Ovary (tissue), 10 donors: ENCODE measurements at regions of chr1 and their contacts with region 1.

Region 1: GRCh38 chr1:39538588-39539465 is 37.8 kb downstream of the PABPC4 start:
- DNase-seq: peak; percentile 72 to 81 (median 73)
- H3K4me3 ChIP-seq: no peak overlapping the region
- H3K27ac ChIP-seq: no peak overlapping the region
- H3K4me1 ChIP-seq: no peaks in the 10 kb centered on the region
- H3K27me3 ChIP-seq: no peaks in the 10 kb centered on the region
- CTCF ChIP-seq: peak; percentile 77 to 93 (median 83)
- EP300 ChIP-seq: no peak
- POLR2A ChIP-seq: no peak

Region 2: DNA sequence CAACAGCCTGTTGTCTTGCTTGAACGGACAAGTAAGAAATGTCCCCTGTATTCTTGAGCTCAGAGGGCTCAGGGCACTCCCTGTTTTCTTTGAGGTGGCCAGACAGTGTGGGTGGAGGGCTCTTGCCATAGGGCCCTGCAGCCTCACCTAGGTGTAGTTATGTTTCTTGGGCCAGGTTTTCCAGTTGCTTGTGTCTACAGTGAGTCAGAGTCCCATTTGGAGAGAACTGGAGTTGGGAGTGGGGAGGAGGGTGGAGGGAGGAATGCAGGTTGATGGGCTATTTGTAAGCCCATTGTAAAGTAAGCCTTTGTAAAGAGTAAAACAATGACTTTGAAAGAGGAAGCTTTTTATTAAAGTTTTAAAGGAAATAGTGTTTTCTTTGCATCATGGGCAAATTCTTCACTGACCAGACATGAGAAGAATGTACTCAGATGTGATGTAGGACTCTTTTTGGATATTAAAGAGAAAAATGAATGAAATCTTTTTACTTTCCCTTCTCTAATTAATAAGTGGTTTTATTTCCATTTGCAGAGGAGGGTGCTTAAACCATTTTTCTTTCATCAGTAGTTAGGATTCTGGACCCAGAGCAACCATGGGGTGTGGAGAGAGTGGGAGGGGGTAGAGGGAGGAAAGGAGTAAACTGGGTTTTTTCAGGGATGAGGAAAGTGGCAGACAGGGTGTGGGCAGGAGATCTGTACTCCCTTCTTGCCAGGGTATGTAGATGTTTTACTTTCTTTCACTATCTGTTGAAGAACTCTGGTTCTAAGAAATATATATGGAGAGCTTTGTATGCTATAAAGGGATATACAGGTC is 379.4 kb before region 1 on chr1:
- intact Hi-C with region 1: no loop called
- DNase-seq: no peak
- H3K4me3 ChIP-seq: no peak overlapping the region
- H3K27ac ChIP-seq: no peak overlapping the region
- H3K4me1 ChIP-seq: peaks cover 23% of the 10 kb centered on the region
- H3K27me3 ChIP-seq: no peaks in the 10 kb centered on the region
- CTCF ChIP-seq: no peak
- EP300 ChIP-seq: no peak
- POLR2A ChIP-seq: no peak

Region 3: DNA sequence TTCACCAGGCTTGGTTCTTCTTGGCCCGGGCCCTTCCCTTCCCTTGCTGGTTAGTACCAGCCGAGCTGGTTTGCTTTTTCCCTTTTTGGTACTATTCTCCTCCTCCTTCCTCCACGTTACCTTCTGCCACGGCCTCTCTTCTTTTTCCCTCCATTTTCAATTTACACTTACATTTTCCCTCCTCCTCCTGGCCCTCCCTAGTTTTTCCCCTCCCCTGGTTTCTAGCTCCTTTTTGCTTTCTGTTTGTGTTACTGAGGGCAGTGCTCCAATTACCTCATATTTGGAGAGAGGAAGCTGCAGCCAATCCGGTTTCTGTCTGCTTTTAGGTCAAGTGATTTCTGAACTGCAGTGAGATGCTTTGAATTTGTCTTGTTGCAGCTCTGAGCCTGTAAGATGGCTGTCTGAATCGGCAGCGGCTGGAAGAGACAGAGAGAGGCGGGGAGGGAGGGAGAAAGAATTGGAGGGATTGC is 270.7 kb before region 1 on chr1:
- intact Hi-C with region 1: loop called in 1 of 4 experiments (anchors 5 kb)
- DNase-seq: peak in 4 of 5 donors; percentile 40 to 67 (median 45)
- H3K4me3 ChIP-seq: peak overlapping the region; percentile 19
- H3K27ac ChIP-seq: peak overlapping the region; percentile 26 to 79
- H3K4me1 ChIP-seq: peaks cover 19% of the 10 kb centered on the region
- H3K27me3 ChIP-seq: no peaks in the 10 kb centered on the region
- CTCF ChIP-seq: no peak
- EP300 ChIP-seq: no peak
- POLR2A ChIP-seq: no peak

Region 4: GRCh38 chr1:39672551-39672947 is 133.7 kb after region 1 on chr1:
- intact Hi-C with region 1: no loop called
- DNase-seq: peak in 1 of 5 donors; percentile 61
- H3K4me3 ChIP-seq: no peak overlapping the region
- H3K27ac ChIP-seq: no peak overlapping the region
- H3K4me1 ChIP-seq: no peaks in the 10 kb centered on the region
- H3K27me3 ChIP-seq: no peaks in the 10 kb centered on the region
- CTCF ChIP-seq: no peak
- EP300 ChIP-seq: no peak
- POLR2A ChIP-seq: no peak